H1 (cell line): ENCODE measurements at regions of chrX and their contacts with region 1.

Region 1: GRCh38 chrX:111823128-111823527 is 52.9 kb upstream of the TRPC5OS start:
- DNase-seq: peak; percentile 3 to 61
- H3K4me3 ChIP-seq: no peak overlapping the region
- H3K27ac ChIP-seq: no peak overlapping the region
- H3K4me1 ChIP-seq: peaks cover 0 to 4% (median 1%) of the 10 kb centered on the region in 4 experiments; a peak in 2 of 7 replicates
- H3K27me3 ChIP-seq: no peaks in the 10 kb centered on the region
- CTCF ChIP-seq: peak; percentile 68 to 72 (median 71)
- EP300 ChIP-seq: no peak
- POLR2A ChIP-seq: no peak
- RAD21 ChIP-seq: peak; percentile 82 to 88

Region 2: GRCh38 chrX:112043997-112044396 is 220.9 kb after region 1 on chrX:
- CTCF ChIA-PET with region 1: interaction called, 12 read pairs
- POLR2A ChIA-PET with region 1: no interaction called
- DNase-seq: no peak
- H3K4me3 ChIP-seq: no peak overlapping the region
- H3K27ac ChIP-seq: no peak overlapping the region
- H3K4me1 ChIP-seq: no peaks in the 10 kb centered on the region
- H3K27me3 ChIP-seq: no peaks in the 10 kb centered on the region
- CTCF ChIP-seq: no peak; a peak in 1 of 4 replicates
- EP300 ChIP-seq: no peak
- POLR2A ChIP-seq: no peak
- RAD21 ChIP-seq: peak; percentile 54 to 63